Aorta (tissue), 5 donors: ENCODE measurements at regions of chr4 and their contacts with region 1.

Region 1: DNA sequence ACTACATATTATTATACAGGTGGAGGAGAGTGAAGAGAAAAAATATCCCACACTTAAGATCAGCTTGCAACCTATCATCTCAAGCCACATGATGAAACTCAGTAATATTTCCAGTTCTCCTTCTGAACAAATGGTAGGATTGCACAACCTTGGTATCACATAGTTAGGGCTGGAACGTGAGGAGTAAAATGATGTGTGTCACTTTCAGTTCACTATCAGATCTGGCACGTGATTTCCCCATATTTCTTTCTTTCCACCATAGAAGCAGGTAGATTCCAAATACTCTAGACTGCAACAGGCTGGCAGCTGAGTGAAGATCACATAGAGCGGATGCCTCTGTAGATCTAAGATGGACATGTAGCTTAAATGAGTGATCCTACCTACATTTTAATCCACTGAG is 150.6 kb upstream of the ANKRD50 start:
- DNase-seq: no peak
- ATAC-seq: no peak
- H3K4me3 ChIP-seq: no peak overlapping the region
- H3K27ac ChIP-seq: no peak overlapping the region
- H3K4me1 ChIP-seq: peaks cover 0 to 2% of the 10 kb centered on the region in 2 donors
- H3K27me3 ChIP-seq: no peaks in the 10 kb centered on the region

Region 2: DNA sequence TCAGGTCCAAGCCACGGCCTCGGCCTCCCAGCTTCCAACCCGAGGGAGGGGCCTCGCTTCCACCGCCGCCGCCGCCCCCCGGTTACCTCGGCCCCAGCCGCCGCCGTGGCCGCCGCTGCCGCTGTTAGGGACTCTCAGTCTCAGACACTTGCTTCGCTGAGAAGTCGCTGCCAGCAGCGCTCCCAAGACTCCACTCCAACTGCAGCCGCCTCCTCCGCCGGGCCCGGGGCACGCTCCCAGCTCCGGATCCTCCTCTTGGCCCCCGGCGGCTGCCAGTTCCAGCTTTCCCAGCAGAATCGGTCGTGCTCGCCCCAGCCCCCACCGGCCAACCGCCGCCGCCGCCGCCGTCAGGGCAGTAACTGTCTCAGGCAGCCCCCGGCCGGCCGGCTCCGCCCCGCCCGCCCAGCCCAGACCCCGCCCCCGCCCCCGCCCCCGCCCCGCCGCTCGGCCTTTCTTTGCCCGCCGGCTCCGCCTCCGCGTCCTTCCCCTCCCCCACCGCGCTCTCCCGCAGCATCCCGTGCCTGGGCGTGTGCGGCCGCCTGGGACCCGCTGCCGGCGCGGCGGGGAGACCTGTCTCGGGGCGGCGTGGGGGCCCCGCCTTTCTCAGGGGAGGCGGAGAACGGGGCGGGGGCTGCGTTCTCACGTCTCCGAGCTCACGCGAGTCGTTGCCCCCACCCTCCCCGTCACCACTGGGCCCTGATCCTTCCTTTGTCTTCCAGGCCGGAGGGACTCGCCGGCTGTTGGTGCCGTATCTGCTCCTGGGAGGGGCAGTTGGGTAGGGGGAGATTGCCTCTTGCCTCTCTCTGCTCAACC is 150.5 kb before region 1 on chr4 and contains the start of gene ANKRD50:
- intact Hi-C with region 1: loop called in 1 of 2 experiments (anchors 10 kb)
- DNase-seq: peak; percentile 93 to 96
- ATAC-seq: peak; percentile 93
- H3K4me3 ChIP-seq: peak within 1 kb of the TSS; percentile 55 to 79
- H3K27ac ChIP-seq: peak within 1 kb of the TSS; percentile 95 to 100
- H3K4me1 ChIP-seq: peaks cover 4 to 10% of the 10 kb centered on the region in 2 donors
- H3K27me3 ChIP-seq: no peaks in the 10 kb centered on the region
- total RNA-seq, gene ANKRD50: 26.5 to 27.4 TPM